ENCODE measurements at regions of chr9 and their contacts with region 1.

Region 1: DNA sequence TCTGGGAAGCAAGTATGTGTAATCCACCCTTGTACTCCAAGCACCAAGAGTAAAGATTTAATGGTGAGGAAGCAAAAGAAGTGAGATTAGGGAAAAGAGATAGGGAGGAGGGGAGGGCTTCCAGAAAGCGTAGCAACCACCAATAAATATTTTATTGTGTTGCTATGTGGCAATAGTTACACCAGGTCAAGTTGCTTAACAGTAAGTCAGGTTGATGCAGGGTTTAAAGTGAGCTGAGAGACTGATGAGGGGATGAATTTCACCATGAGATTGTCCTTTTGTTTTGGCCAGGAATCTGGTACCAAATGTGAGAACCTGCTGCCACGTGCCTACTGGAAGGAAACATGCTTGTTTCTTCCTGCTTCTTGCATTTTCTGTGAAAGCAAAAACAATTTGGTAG is 62.7 kb downstream of the PCSK5 start:
- DNase-seq: no peak
- H3K27ac ChIP-seq: no peak overlapping the region
- CTCF ChIP-seq: no peak

Region 2: DNA sequence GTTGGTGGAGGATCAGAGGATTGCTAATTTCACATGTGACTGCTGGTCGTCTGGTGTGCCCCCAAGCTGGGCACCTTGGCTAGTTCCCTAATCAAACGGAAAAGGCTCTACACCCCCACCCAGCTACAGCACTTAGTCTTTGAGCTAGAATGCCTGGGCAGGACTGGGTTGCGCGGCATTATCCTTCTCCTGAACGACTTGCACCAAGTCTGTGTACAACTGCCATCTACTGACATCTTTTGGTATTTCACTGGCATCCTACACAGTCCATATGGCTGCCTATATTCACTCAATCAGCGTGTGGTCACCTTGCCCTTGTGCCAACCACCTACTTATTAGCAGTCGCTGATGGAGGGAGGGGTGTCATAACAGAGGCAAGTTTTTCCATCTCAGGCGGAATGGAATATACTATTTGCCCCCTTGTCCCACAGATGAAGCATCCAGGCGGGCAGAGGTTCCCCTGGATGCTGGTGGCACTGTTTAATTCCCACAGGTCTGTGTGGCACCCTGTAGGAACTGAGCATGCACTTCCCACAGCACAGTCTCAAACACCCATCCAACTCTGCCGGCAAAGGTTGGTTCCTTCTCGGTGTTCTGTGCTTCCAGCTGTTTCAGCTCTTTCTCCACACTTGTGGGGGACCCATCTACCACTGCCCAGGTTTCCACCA is 714.8 kb before region 1 on chr9:
- CTCF ChIA-PET with region 1: interaction called, 11 read pairs
- POLR2A ChIA-PET with region 1: no interaction called
- DNase-seq: peak; percentile 33
- H3K27ac ChIP-seq: no peak overlapping the region
- CTCF ChIP-seq: no peak

Region 3: DNA sequence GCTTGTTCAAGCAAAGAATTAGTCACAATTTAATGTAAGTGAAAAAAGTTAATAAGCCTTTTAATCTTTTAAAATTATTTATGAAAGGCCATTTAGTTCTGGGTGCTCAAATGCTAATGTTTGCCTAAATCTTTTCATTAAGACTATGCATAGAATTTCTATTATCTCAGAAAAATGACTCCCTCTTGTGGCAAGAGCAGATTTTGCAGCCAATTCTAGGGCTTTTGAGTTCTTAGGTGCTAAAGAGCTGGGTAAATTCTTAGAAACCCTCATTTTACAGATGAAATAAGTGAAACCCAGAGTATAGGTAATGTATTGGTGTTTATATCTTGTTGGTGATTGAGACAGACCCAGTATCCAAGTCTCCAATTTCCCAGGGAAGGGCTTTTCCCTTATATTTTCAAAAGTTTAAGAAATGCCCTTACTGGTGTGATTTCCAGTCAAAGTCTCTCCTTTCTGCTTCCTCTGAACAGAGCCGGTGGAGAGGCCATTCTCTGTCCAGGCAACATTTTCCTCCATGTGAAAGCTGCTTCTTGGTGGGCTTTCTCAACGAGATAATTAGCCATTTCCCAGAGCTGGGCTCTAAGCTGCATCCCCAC is 86.8 kb before region 1 on chr9:
- CTCF ChIA-PET with region 1: no interaction called
- POLR2A ChIA-PET with region 1: no interaction called
- DNase-seq: peak; percentile 33
- H3K27ac ChIP-seq: no peak overlapping the region
- CTCF ChIP-seq: peak; percentile 78

Region 4: GRCh38 chr9:76032038-76032796 is 79.0 kb after region 1 on chr9:
- CTCF ChIA-PET with region 1: no interaction called
- POLR2A ChIA-PET with region 1: no interaction called
- DNase-seq: no peak
- H3K27ac ChIP-seq: no peak overlapping the region
- CTCF ChIP-seq: no peak

Region 5: DNA sequence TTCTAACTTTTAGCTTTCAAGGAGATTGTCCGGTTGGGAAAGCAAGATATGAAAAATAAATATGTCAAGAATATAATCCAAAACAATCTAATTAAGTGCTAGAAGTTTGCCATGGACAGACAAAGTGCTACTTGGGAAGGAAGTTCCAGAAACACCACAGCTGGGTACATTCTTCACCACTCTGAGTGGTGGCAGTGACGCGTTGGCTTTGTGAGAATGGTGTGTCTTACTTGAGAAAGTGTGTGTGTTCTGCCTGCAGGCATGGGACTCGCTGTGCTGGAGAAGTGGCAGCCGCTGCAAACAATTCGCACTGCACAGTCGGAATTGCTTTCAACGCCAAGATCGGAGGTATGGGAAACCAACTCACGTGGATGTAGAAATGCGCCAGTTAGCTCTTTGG is 114.5 kb after region 1 on chr9:
- CTCF ChIA-PET with region 1: no interaction called
- POLR2A ChIA-PET with region 1: no interaction called
- DNase-seq: no peak
- H3K27ac ChIP-seq: no peak overlapping the region
- CTCF ChIP-seq: no peak

Region 6: GRCh38 chr9:76107482-76107881 is 154.3 kb after region 1 on chr9:
- CTCF ChIA-PET with region 1: no interaction called
- POLR2A ChIA-PET with region 1: no interaction called
- DNase-seq: no peak
- H3K27ac ChIP-seq: no peak overlapping the region
- CTCF ChIP-seq: no peak

Measured in RWPE1 (cell line).